GM13977 (cell line): ENCODE measurements at regions of chr6 and their contacts with region 1.

Region 1: GRCh38 chr6:118968416-118968815 is 33.5 kb upstream of the MCM9 start:
- DNase-seq: no peak
- CTCF ChIP-seq: peak; percentile 28

Region 2: DNA sequence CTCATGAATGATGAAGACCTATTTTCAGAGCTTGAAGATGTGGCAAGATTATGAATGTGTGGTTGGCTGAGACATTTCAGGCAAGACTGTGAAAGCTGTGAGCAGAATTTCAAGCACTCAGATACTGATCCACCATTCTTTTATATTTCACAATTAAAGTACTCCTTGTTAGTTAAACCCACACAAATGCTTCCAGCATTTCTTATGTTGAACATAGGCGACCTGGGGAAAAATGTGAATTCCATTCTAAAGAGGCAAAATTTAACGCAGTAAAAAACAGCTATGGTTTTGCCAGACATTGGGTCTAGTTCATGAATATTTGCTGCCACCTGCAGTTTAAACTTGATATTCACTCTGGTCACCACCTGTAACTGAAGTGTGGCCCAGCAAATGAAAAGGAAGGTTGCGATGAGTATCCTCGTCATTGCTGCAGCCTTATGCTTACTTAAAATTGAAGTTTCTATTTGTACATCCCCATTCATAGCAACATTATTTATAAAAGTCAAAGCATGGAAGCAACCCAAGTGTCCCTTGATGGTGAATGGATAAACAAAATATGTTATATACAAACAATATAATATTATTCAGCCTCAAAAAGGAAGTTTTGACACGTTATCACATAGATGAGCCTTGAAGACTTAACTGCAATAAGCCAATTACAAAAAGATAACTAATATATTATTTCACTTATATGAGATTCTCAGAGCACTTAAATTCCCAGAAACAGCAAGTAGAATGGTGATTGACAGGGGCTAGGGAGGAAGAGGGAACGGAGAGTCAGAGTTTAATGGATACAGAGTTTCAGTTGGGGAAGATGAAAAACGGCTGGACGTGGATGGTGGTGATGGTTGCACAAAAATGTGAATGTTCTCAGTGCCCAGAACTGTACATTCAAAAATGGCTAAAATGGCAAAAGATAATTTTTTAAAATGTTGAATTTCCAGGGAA is 142.5 kb after region 1 on chr6:
- in situ Hi-C with region 1: loop called (anchors 10 kb)
- DNase-seq: peak; percentile 49
- CTCF ChIP-seq: peak; percentile 58